ENCODE measurements at regions of chr1 and their contacts with region 1.

Region 1: GRCh38 chr1:175887981-175888433 is 144.6 kb upstream of the TNR start:
- DNase-seq: peak; percentile 52 to 62
- H3K4me3 ChIP-seq: no peak overlapping the region
- H3K4me3 Mint-ChIP-seq: no peak overlapping the region
- H3K27ac Mint-ChIP-seq: no peak overlapping the region
- H3K4me1 ChIP-seq: no peaks in the 10 kb centered on the region
- H3K4me1 Mint-ChIP-seq: no peaks in the 10 kb centered on the region
- H3K27me3 ChIP-seq: no peaks in the 10 kb centered on the region
- H3K27me3 Mint-ChIP-seq: no peaks in the 10 kb centered on the region
- CTCF ChIP-seq: peak; percentile 71 to 83

Region 2: GRCh38 chr1:175750366-175751071 is 137.5 kb before region 1 on chr1:
- CTCF ChIA-PET with region 1: no interaction called
- POLR2A ChIA-PET with region 1: no interaction called
- intact Hi-C with region 1: loop called (anchors 5 kb)
- DNase-seq: no peak
- H3K4me3 ChIP-seq: no peak overlapping the region
- H3K4me3 Mint-ChIP-seq: no peak overlapping the region
- H3K27ac Mint-ChIP-seq: no peak overlapping the region
- H3K4me1 ChIP-seq: no peaks in the 10 kb centered on the region
- H3K4me1 Mint-ChIP-seq: no peaks in the 10 kb centered on the region
- H3K27me3 ChIP-seq: no peaks in the 10 kb centered on the region
- H3K27me3 Mint-ChIP-seq: peaks cover 20% of the 10 kb centered on the region
- CTCF ChIP-seq: no peak

Region 3: DNA sequence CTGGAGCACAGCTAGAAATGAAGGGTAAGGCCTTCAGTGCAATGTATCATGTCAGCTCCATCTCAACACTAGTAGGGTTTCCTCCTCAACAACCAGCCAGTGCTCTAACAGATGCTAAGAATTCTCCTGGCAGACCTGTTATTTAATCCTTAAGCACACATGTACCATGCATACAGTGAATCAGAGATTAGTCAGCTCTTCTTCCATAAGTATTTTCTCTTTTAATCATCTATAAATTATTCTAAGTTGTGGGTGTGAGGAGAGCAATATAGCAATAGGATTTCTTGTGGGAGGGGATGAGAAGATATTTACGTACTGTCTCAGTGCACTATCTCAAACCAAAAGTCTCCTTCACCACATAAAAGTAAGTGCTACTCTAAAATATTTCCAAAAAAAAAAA is 223.8 kb after region 1 on chr1:
- CTCF ChIA-PET with region 1: no interaction called
- POLR2A ChIA-PET with region 1: no interaction called
- intact Hi-C with region 1: no loop called
- DNase-seq: no peak
- H3K4me3 ChIP-seq: no peak overlapping the region
- H3K4me3 Mint-ChIP-seq: no peak overlapping the region
- H3K27ac Mint-ChIP-seq: no peak overlapping the region
- H3K4me1 ChIP-seq: peaks cover 10% of the 10 kb centered on the region
- H3K4me1 Mint-ChIP-seq: no peaks in the 10 kb centered on the region
- H3K27me3 ChIP-seq: no peaks in the 10 kb centered on the region
- H3K27me3 Mint-ChIP-seq: no peaks in the 10 kb centered on the region
- CTCF ChIP-seq: no peak